ENCODE measurements at regions of chr5 and their contacts with region 1.

Region 1: DNA sequence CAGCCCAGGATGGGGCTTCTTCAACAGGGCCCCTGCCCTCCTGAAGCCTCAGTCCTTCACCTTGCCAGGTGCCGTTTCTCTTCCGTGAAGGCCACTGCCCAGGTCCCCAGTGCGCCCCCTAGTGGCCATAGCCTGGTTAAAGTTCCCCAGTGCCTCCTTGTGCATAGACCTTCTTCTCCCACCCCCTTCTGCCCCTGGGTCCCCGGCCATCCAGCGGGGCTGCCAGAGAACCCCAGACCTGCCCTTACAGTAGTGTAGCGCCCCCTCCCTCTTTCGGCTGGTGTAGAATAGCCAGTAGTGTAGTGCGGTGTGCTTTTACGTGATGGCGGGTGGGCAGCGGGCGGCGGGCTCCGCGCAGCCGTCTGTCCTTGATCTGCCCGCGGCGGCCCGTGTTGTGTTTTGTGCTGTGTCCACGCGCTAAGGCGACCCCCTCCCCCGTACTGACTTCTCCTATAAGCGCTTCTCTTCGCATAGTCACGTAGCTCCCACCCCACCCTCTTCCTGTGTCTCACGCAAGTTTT is 23.6 kb downstream of the PCDHGC5 start:
- DNase-seq: peak; percentile 68 to 91 (median 82)
- ATAC-seq: peak; percentile 51
- H3K4me3 ChIP-seq: peak overlapping the region; percentile 50 to 54
- H3K4me3 Mint-ChIP-seq: peak overlapping the region; percentile 87
- H3K27ac ChIP-seq: no peak overlapping the region
- H3K27ac Mint-ChIP-seq: no peak overlapping the region
- H3K4me1 ChIP-seq: peaks cover 21% of the 10 kb centered on the region
- H3K4me1 Mint-ChIP-seq: peaks cover 36% of the 10 kb centered on the region
- H3K27me3 ChIP-seq: no peaks in the 10 kb centered on the region
- H3K27me3 Mint-ChIP-seq: no peaks in the 10 kb centered on the region
- CTCF ChIP-seq: peak; percentile 83

Region 2: DNA sequence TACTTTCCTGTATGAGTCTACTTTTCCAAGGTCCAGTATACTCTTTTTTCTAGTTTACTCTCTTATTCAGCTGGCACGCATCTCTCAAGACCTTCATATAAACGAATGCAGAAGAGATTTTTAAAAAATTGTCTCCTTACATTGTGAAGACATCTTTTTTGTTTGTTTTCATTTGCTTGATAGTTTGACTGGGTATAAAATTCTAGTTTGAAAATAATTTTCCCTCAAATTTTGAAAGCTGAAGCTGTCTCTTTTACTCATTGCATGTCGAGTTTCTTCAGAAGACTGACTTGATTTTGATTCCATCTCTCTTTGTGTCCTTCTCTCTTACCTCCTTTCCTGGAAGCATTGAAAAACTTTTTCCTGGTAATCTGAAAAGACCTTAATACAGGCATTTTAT is 316.1 kb before region 1 on chr5:
- CTCF ChIA-PET with region 1: no interaction called
- POLR2A ChIA-PET with region 1: no interaction called
- intact Hi-C with region 1: no loop called
- DNase-seq: no peak
- ATAC-seq: no peak
- H3K4me3 ChIP-seq: no peak overlapping the region
- H3K4me3 Mint-ChIP-seq: no peak overlapping the region
- H3K27ac ChIP-seq: no peak overlapping the region
- H3K27ac Mint-ChIP-seq: no peak overlapping the region
- H3K4me1 ChIP-seq: no peaks in the 10 kb centered on the region
- H3K4me1 Mint-ChIP-seq: no peaks in the 10 kb centered on the region
- H3K27me3 ChIP-seq: peaks cover 0 to 1% of the 10 kb centered on the region in 2 experiments
- H3K27me3 Mint-ChIP-seq: peaks cover 45% of the 10 kb centered on the region
- CTCF ChIP-seq: no peak

Region 3: GRCh38 chr5:141326088-141326854 is 186.2 kb before region 1 on chr5:
- CTCF ChIA-PET with region 1: interaction called, 7 read pairs
- POLR2A ChIA-PET with region 1: interaction called, 12 read pairs
- intact Hi-C with region 1: loop called (anchors 1 kb)
- DNase-seq: peak; percentile 43 to 79 (median 73)
- ATAC-seq: peak; percentile 94
- H3K4me3 ChIP-seq: peak overlapping the region; percentile 42 to 56
- H3K4me3 Mint-ChIP-seq: peak overlapping the region; percentile 91
- H3K27ac ChIP-seq: peak overlapping the region; percentile 9 to 58
- H3K27ac Mint-ChIP-seq: peak overlapping the region; percentile 93
- H3K4me1 ChIP-seq: peaks cover 2% of the 10 kb centered on the region
- H3K4me1 Mint-ChIP-seq: peaks cover 8% of the 10 kb centered on the region
- H3K27me3 ChIP-seq: peaks cover 0 to 5% of the 10 kb centered on the region in 2 experiments
- H3K27me3 Mint-ChIP-seq: peaks cover 34% of the 10 kb centered on the region
- CTCF ChIP-seq: peak; percentile 62

Region 4: GRCh38 chr5:141412854-141413539 is 99.5 kb before region 1 on chr5 and contains the start of gene PCDHGA10:
- CTCF ChIA-PET with region 1: interaction called, 10 read pairs
- POLR2A ChIA-PET with region 1: no interaction called
- intact Hi-C with region 1: loop called in 1 of 2 experiments (anchors 2 kb)
- DNase-seq: peak in 8 of 9 experiments; percentile 18 to 67 (median 50)
- ATAC-seq: peak; percentile 74
- H3K4me3 ChIP-seq: peak within 1 kb of the TSS; percentile 32 to 61
- H3K4me3 Mint-ChIP-seq: peak within 1 kb of the TSS; percentile 83
- H3K27ac ChIP-seq: no peak within 1 kb of the TSS
- H3K27ac Mint-ChIP-seq: no peak within 1 kb of the TSS
- H3K4me1 ChIP-seq: peaks cover 4% of the 10 kb centered on the region
- H3K4me1 Mint-ChIP-seq: peaks cover 18% of the 10 kb centered on the region
- H3K27me3 ChIP-seq: peaks cover 26 to 27% of the 10 kb centered on the region in 2 experiments
- H3K27me3 Mint-ChIP-seq: peaks cover 70% of the 10 kb centered on the region
- CTCF ChIP-seq: peak; percentile 82
- total RNA-seq, gene PCDHGA10: 0.08 TPM in 1 of 2 experiments, not detected in the other

Region 5: DNA sequence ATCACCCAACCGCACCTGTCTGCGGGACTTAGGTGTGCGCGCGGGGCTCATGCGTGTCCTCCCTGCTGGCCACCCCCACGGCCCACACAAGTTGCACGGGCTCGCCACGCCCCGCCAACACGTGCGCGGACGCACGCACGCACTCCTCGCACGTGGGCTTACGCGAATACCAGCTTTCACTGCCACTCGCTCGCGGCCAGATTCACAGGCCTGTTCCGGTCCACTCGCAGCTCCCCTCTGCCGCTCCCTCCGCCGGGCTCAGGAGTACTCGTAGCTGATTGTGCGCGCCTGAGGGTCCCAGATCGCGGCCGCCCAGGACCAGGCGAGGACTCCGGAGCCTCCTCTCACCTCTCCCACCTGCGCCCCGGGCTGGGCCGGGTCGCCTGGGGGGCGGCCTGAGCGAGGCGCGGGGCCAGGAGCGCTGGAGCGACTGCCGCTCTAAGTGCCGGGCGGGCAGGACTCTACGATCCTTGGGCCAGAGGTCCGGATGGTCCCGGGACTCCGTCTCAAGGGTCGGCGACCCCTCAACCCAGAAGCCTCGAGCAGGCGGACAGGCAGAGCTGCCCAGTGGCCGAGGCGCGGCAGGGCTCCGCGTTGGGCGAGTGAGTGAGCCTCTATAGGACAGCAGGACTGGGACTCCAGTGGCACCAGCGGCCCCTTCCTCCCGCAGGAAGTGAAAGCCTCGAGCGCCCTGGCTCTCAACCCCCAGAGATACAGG is 20.1 kb before region 1 on chr5:
- CTCF ChIA-PET with region 1: interaction called, 12 read pairs
- POLR2A ChIA-PET with region 1: no interaction called
- intact Hi-C with region 1: no loop called
- DNase-seq: peak in 1 of 9 experiments; percentile 30
- ATAC-seq: peak; percentile 44
- H3K4me3 ChIP-seq: peak overlapping the region in 1 of 2 experiments; percentile 37
- H3K4me3 Mint-ChIP-seq: peak overlapping the region; percentile 69
- H3K27ac ChIP-seq: no peak overlapping the region
- H3K27ac Mint-ChIP-seq: no peak overlapping the region
- H3K4me1 ChIP-seq: peaks cover 2% of the 10 kb centered on the region
- H3K4me1 Mint-ChIP-seq: peaks cover 17% of the 10 kb centered on the region
- H3K27me3 ChIP-seq: peaks cover 3 to 14% of the 10 kb centered on the region in 2 experiments
- H3K27me3 Mint-ChIP-seq: peaks cover 76% of the 10 kb centered on the region
- CTCF ChIP-seq: no peak

Measured in CD8-positive, alpha-beta T cell (primary cell).